B cell (primary cell): ENCODE measurements at regions of chr2 and their contacts with region 1.

Region 1: DNA sequence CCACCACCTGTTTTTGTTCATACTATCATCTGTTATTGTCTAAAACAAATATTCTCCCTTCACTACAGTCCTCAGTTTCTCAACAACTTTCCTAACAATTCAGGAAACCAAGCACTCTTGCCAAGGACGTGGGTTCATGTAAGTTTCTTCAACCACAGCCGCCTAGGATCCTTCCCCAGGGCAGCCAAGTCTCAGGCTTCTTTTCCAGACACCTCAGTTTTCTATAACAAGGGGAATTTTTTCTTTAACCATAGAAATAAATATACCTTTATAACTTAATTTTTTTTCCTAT is 39.4 kb upstream of the AGPS start:
- DNase-seq: no peak
- ATAC-seq: no peak
- H3K4me3 ChIP-seq: no peak overlapping the region
- H3K4me3 Mint-ChIP-seq: no peak overlapping the region
- H3K27ac ChIP-seq: no peak overlapping the region
- H3K27ac Mint-ChIP-seq: no peak overlapping the region
- H3K4me1 ChIP-seq: no peaks in the 10 kb centered on the region
- H3K4me1 Mint-ChIP-seq: peaks cover 13% of the 10 kb centered on the region
- H3K27me3 ChIP-seq: no peaks in the 10 kb centered on the region
- H3K27me3 Mint-ChIP-seq: peaks cover 4% of the 10 kb centered on the region
- CTCF ChIP-seq: no peak

Region 2: DNA sequence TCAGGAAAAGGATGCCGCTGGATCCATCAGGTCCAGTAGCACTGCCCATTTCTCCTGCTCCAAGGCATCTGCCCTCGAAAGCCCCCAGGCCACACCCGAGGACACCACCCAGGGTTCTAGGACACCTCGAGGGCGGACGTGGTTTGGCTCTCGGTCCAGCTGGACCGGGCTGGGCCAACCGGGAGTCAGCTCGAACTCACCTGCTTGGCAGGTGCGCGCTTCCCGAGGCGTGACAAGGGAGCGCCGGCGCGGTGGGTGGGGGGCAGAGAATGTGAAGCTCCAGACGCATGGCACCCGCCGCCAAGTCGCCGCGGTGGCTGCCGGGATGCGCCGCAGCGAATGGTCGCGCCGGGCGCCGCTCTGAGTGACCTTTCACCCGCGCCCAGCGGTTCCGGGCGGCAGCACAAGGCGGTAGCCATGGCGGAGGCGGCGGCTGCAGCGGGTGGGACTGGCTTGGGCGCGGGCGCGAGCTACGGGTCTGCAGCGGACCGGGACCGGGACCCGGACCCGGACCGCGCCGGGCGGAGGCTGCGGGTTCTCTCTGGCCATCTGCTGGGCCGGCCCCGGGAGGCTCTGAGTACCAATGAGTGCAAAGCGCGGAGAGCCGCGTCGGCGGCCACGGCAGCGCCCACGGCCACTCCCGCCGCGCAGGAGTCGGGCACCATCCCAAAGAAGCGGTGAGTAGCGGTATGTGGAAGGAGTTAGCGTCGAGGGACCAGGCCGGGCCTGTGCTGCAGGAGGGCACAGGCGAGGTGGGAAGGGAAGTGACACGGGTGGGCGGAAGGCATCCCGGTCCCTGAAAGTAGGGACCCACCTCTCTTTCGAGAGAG is 39.5 kb after region 1 on chr2 and contains the start of gene AGPS:
- CTCF ChIA-PET with region 1: no interaction called
- POLR2A ChIA-PET with region 1: no interaction called
- intact Hi-C with region 1: loop called (anchors 5 kb)
- DNase-seq: peak; percentile 66
- ATAC-seq: peak; percentile 91
- H3K4me3 ChIP-seq: peak within 1 kb of the TSS; percentile 70 to 83 (median 77)
- H3K4me3 Mint-ChIP-seq: peak within 1 kb of the TSS; percentile 91
- H3K27ac ChIP-seq: peak within 1 kb of the TSS in 1 of 2 donors; percentile 47
- H3K27ac Mint-ChIP-seq: peak within 1 kb of the TSS; percentile 87
- H3K4me1 ChIP-seq: peaks cover 19 to 28% of the 10 kb centered on the region in 2 donors
- H3K4me1 Mint-ChIP-seq: peaks cover 42% of the 10 kb centered on the region
- H3K27me3 ChIP-seq: no peaks in the 10 kb centered on the region
- H3K27me3 Mint-ChIP-seq: no peaks in the 10 kb centered on the region
- CTCF ChIP-seq: no peak
- total RNA-seq, gene AGPS: 23.2 and 25.5 TPM in 2 replicates